Left cardiac atrium (tissue), 4 donors: ENCODE measurements at regions of chr13 and their contacts with region 1.

Region 1: DNA sequence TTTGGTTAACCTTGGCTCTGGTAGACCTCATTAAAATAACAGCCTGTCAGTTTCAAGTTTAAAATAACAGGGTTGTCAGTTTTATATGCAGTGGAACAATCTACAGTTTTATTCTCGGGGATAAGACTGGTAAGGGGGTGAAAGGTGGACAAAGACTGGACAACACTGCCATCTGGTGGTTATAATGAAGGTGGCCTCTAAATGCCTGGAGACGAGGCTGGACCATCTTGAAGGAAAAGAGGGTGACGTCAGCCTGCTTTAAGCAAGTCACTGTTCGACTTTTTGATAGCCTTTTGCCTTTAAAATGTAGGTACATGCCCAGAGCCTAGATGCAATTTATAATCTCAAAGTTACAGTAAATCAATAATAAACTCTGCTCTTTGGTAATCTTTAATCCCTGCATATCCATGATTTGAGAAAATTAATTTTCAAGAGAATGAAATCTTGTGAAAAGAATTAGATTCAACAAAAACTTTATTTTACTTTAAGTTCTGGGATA is 117.0 kb downstream of the DCT start:
- DNase-seq: peak; percentile 45
- ATAC-seq: peak; percentile 94 to 97

Region 2: GRCh38 chr13:93660391-93661063 is 701.9 kb before region 1 on chr13:
- intact Hi-C with region 1: loop called in 1 of 2 experiments (anchors 10 kb)
- DNase-seq: no peak
- ATAC-seq: no peak

Region 3: DNA sequence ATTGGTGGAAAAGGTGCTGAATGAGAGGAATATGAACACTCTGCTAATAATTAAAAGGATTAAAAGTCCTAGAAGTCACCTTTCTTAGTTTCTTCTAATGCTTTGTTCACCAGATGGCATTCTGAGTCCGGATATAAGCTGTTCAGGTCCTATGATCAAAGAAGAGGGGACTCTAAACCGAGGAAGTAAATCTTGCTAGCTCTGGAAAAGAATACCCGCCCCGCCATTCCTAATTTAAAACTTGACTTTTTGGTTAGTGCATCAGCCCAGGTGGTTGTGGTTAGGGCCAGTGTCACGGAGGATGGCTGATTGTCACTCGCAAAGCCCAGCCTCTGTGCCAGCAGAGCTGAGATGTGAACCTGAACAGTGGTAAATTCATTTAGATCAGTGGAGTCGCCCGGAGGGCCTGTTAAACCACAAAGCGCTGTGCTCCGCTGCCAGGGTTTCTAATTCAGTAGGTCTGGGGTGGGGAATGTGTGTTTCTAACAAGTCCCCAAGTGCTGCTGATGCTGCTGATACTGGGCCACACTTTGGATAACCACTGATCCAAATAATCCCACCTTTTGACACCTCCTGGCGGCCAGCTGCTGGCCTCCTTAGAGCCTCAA is 308.4 kb before region 1 on chr13:
- intact Hi-C with region 1: no loop called
- DNase-seq: no peak
- ATAC-seq: no peak

Region 4: GRCh38 chr13:94435604-94436226 is 73.3 kb after region 1 on chr13:
- intact Hi-C with region 1: no loop called
- DNase-seq: no peak
- ATAC-seq: peak; percentile 48 to 72